ENCODE measurements at regions of chr1 and their contacts with region 1.

Region 1: DNA sequence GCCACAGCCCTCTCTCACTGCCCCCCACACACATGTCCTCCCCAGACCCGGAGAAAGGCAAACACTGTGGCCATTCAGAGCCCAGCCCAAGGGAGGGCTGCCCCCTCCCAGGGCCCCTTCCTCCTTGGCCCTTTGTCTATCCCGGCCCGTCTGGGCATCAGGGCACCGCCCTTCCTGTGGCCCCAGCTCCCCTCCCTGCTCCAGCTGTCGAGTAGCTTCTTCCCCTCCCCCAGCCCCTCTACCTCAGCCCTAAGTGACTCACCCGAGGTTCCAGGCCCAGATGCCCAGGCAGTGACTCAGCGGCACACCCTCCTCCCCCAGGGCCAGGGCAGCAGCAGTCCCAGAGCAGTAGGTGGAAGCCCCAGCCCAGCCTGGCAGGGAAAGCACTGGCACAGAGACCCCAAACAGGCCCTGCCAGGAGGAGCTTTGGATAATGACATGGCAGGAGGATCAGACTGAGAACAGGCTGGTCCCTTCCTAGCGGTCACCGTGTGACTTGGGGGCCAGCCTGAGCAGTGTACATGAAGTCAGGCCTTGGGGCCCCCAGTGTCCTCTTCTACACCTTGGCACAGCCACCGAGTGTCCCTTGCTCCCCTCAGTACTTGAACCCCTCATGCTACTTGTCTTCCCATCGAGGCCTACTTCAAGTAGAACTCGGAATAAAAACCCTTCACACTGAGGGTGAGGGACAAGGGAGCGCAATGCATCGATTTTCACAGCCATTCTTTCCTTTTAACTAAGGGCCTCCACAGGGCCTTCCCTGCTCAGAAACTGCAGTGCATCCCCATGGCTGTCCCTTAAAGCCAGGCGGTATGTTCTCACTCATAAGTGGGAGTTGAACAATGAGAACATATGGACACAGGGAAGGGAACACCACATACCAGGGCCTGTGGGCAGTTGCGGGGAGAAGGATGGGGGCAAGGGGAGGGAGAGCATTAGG is 1.1 kb upstream of the S100A2 start:
- DNase-seq: peak; percentile 99
- H3K4me3 ChIP-seq: no peak overlapping the region
- H3K27ac ChIP-seq: peak overlapping the region; percentile 90 to 97 (median 94)
- H3K4me1 ChIP-seq: peaks cover 0 to 39% (median 37%) of the 10 kb centered on the region in 4 donors
- H3K27me3 ChIP-seq: no peaks in the 10 kb centered on the region
- CTCF ChIP-seq: no peak
- EP300 ChIP-seq: peak in 2 of 4 donors; percentile 64 to 82
- POLR2A ChIP-seq: peak in 1 of 2 donors; percentile 63

Region 2: DNA sequence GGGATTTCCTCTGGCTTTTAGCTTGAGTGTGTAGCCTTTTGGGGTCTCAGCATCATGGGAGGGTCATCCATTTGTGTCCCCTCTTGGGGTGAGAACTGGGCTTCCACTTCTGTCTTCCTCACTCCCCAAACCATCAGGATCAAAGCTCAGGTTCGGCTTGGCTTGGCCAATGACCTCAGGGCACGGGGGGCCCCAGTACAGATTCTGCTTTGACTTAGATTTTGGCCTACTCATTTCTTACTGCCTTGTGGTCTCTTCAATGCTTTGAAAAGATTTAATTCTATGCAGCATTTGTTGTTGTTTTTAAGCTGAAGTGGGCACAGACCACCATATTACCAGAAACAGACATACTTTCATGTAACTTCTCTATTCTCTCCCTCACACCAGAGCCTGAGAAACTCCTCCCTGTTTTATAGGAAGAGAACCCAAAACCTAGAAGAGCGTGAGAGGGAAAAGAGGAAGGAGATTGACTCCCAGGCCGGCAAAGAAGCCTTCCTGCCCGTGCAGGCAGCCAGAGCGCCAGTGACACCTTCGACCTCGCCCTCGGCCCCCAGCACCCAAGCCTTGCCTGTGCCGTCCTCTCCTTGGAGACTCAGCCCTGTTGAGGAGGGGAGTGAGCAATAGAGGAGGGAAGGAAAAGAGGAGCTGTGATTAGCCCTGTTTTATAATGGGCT is 15.7 kb before region 1 on chr1:
- intact Hi-C with region 1: loop called (anchors 2 kb)
- DNase-seq: no peak
- H3K4me3 ChIP-seq: no peak overlapping the region
- H3K27ac ChIP-seq: peak overlapping the region in 2 of 4 donors; percentile 90
- H3K4me1 ChIP-seq: peaks cover 0 to 60% (median 55%) of the 10 kb centered on the region in 4 donors
- H3K27me3 ChIP-seq: no peaks in the 10 kb centered on the region
- CTCF ChIP-seq: no peak
- EP300 ChIP-seq: no peak
- POLR2A ChIP-seq: no peak

Region 3: DNA sequence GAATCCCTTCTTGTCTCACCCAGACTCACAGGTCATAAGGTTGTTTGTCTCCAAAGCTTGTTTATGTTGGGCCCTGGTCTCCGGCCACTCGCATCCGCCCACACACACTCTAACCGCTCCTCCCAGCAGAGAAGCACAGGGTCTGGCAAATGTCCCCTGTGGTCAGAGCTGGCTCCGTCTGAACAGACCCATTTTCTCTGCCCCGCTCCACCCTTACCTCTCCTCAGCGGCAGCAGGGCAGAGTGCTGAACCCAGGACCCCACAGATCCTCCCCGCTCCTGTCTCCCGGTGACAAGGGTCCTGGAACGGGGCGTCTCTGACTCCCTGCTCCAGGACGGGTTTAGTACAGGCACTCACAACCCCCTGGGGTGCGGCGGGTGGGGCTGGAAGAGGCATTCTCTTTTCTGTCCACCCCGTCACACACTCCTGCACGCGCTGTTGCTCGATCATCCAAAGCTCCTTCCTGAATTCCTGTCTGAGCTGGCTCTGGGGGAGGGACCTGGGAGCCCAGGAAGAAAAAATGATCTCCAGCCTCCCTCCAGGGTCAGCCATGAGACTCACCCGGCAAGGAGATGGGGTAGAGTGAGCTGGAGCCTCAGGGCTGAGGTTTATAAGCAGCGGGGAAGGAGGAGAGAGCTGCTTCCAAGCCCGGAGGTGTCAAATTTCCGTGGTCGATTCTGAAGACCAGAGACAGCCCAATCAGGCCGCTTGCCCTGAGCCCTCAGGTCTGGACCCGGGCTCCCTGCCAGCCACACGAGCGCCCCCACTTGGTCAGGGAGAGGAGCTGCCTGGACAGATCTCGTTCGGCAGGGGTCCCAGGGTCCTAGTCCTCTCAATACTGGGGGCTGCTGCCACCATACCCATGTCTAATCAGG is 60.4 kb after region 1 on chr1 and contains the start of gene S100A13:
- intact Hi-C with region 1: loop called (anchors 2 kb)
- DNase-seq: peak; percentile 92
- H3K4me3 ChIP-seq: peak within 1 kb of the TSS; percentile 45 to 62 (median 60)
- H3K27ac ChIP-seq: peak within 1 kb of the TSS; percentile 83 to 94 (median 90)
- H3K4me1 ChIP-seq: peaks cover 0 to 44% (median 42%) of the 10 kb centered on the region in 4 donors
- H3K27me3 ChIP-seq: no peaks in the 10 kb centered on the region
- CTCF ChIP-seq: peak; percentile 28 to 50 (median 43)
- EP300 ChIP-seq: no peak
- POLR2A ChIP-seq: peak in 1 of 2 donors; percentile 61
- total RNA-seq, gene S100A13: 86.3 to 305 (median 278) TPM

Measured in sigmoid colon (tissue), 7 donors.